ENCODE measurements at regions of chr17 and their contacts with region 1.

Region 1: DNA sequence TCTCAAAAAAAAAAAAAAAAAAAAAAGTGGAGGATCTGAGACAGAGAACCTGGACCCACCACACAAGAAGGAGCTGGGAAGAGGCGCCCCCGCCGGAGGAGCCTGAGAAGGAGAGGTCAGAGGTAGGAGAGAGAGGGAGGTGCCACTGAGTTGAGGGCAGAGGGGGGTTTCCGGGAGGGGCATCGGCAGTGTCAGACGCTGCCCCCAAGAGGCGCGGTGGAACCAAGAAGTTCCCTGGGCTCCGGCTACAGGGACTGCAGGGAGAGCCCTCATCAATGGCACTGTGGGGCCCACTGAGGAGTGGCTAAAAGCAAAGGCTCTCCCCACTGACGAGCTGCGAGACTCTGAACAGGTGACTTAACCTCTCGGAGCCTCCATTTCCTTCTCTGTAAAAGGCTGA is 4.2 kb downstream of the CCDC42 start:
- DNase-seq: no peak
- H3K4me3 ChIP-seq: no peak overlapping the region
- H3K27ac ChIP-seq: no peak overlapping the region
- H3K4me1 ChIP-seq: no peaks in the 10 kb centered on the region
- H3K27me3 ChIP-seq: peaks cover 23% of the 10 kb centered on the region
- CTCF ChIP-seq: no peak

Region 2: DNA sequence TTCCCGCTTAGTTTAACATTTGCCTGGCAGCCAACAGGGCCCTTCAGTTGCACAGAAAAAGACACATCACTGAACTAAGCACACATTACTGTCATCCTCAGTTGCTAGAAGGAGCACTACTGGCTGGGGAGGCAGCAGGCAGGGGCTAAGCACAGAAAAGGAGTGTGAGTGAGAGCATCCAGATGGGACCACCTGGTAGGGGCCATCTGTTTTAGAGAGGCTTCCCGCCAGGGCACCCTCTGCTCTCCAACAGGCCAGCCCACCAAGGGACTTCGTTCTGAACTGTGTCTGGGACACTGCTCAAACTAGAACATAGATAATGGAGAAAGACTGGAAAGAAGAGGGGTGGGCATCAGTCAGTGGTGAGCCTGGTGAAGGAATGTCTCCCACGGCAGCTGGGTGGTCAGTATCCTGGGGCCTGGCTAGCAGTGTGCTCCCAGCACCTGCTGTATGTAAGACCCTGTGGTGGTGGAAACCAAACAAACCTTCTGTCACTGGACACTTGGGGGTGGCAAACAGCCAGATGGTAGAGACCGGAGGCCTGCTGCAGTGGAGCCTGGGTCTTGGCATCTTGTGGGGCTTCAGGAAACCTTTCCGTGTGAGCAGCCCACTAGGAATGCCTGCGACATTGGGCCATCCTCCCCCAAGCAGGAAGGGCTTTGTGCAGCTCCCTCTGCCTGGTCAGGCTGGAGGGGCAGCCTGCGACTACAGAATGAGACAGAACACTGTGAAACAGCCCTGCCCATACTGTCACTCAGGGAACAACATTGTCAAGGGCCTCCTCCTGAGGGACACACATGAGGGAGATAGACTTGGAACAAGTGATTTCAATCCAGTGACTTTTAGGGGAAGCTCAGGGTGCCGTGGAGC is 464.8 kb before region 1 on chr17:
- CTCF ChIA-PET with region 1: no interaction called
- POLR2A ChIA-PET with region 1: interaction called, 11 read pairs
- intact Hi-C with region 1: no loop called
- DNase-seq: no peak
- H3K4me3 ChIP-seq: no peak overlapping the region
- H3K27ac ChIP-seq: no peak overlapping the region
- H3K4me1 ChIP-seq: no peaks in the 10 kb centered on the region
- H3K27me3 ChIP-seq: no peaks in the 10 kb centered on the region
- CTCF ChIP-seq: no peak